ENCODE measurements at regions of chr2 and their contacts with region 1.

Region 1: GRCh38 chr2:74406035-74406434 is 15.4 kb downstream of the C2orf81 start:
- DNase-seq: peak; percentile 37
- ATAC-seq: peak; percentile 99
- H3K4me3 ChIP-seq: no peak overlapping the region
- H3K27ac ChIP-seq: no peak overlapping the region
- H3K4me1 ChIP-seq: peaks cover 5% of the 10 kb centered on the region; the same call in 1 of the 2 replicates
- H3K27me3 ChIP-seq: no peaks in the 10 kb centered on the region
- CTCF ChIP-seq: no peak
- EP300 ChIP-seq: no peak
- POLR2A ChIP-seq: no peak
- RAD21 ChIP-seq: no peak

Region 2: GRCh38 chr2:74421221-74421870 is 15.3 kb after region 1 on chr2 and contains the starts of genes C2orf81 and WDR54:
- CTCF ChIA-PET with region 1: no interaction called
- POLR2A ChIA-PET with region 1: interaction called, 7 read pairs
- RAD21 ChIA-PET with region 1: interaction called, 6 read pairs
- SMC1A ChIA-PET with region 1: interaction called, 14 read pairs
- in situ Hi-C with region 1: no loop called
- intact Hi-C with region 1: no loop called
- DNase-seq: peak; percentile 84
- ATAC-seq: peak; percentile 96
- H3K4me3 ChIP-seq: peak within 1 kb of the TSS; percentile 78
- H3K27ac ChIP-seq: peak within 1 kb of the TSS; percentile 80
- H3K4me1 ChIP-seq: peaks cover 22% of the 10 kb centered on the region
- H3K27me3 ChIP-seq: no peaks in the 10 kb centered on the region
- CTCF ChIP-seq: no peak
- EP300 ChIP-seq: no peak
- POLR2A ChIP-seq: peak; percentile 98
- RAD21 ChIP-seq: no peak
- polyA plus RNA-seq, gene C2orf81: 0.10 to 0.27 TPM
- polyA plus RNA-seq, gene WDR54: 88.7 to 89.5 TPM

Measured in GM12878 (cell line).